Naive thymus-derived CD8-positive, alpha-beta T cell (primary cell): ENCODE measurements at regions of chr5 and their contacts with region 1.

Region 1: DNA sequence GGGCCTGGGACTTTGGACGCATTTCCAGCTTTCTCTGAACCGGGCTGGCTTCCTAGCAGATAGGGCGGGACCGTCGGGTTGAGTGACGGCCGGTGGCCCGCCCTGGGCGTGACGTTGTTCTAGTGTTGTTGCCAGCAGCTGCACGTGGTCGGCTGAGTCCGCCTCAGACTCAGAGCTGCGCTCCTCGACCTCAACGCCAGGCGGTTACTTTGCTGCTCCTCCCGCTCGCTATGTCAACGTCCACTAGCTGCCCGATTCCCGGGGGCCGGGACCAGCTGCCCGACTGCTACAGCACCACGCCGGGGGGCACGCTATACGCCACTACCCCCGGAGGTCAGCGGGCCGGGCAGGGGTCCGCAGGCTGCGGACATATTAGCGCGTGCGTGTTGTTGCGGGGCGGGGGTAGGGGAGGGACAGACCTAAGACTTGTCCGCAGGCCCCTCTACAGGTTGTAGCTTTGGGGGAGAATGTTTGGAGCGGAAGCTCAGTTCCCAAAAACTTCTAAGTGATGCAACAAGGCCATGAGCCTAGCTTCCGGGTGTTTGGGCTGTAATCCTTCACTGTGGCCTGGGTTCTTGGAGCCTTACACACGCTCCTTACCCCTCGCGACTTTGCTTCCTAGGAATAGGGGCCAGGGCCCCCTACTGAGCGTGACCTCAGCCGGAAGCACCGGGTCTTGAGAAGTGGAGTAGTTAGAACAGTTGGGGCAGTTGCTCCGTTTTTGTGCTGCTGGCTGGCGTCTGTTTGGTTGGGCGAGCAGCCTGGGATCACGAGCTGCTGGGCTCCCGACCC is at the start of gene EIF4EBP3:
- DNase-seq: peak; percentile 80 to 92 (median 87)
- ATAC-seq: peak; percentile 92 to 95
- H3K4me3 Mint-ChIP-seq: peak within 1 kb of the TSS; percentile 81 to 96 (median 93)
- H3K27ac Mint-ChIP-seq: peak within 1 kb of the TSS; percentile 94 to 99 (median 98)
- H3K4me1 Mint-ChIP-seq: peaks cover 13 to 36% (median 35%) of the 10 kb centered on the region in 4 donors
- H3K27me3 Mint-ChIP-seq: no peaks in the 10 kb centered on the region
- polyA plus RNA-seq, gene EIF4EBP3: 50.4 to 79.6 (median 71.5) TPM

Region 2: DNA sequence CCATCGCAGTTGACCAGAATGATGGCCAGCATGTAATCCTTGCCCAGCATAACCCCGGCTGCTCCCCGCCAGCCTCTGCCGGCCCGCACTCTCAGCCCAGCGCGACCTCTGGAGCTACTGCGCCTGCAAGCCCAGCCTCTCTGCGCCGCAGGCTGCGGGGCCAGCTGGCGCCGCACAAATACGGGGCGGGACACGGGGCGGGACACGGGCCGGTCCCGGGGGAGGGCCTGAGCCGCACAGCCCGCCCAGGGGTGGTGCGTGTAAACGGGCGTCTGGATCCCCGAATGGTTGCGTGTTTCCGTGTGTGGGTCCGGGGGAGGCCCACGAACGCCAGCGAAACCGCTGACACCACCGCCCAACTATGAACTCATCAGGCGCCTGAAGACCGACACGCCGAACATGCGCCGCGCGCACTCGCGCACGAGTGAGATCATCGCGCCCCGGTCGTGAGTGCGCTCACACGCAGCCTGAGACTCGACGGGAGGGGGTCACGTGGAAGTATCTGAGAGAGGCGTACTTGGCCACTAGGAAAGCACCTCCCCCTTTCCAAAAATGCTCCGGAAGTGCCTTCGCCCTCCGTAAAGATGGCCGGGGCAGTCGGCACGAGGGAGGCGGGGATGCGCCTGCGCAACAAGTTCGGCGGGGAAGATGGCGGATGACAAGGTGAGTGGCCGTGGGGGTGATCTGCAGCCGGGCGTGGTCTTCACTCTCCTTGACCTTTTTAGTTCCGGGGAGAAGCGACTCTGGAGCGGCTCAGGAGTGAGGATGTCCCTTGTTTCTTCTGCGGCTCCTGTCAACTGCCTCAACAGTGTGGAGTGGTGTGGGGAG is 16.7 kb after region 1 on chr5 and contains the starts of genes APBB3 and SLC35A4:
- POLR2A ChIA-PET with region 1: interaction called, 61 read pairs
- DNase-seq: peak; percentile 85 to 99 (median 98)
- ATAC-seq: peak; percentile 88
- H3K4me3 Mint-ChIP-seq: peak within 1 kb of the TSS; percentile 91 to 99 (median 96)
- H3K27ac Mint-ChIP-seq: peak within 1 kb of the TSS; percentile 96 to 99 (median 98)
- H3K4me1 Mint-ChIP-seq: peaks cover 39 to 71% (median 66%) of the 10 kb centered on the region in 4 donors
- H3K27me3 Mint-ChIP-seq: no peaks in the 10 kb centered on the region
- polyA plus RNA-seq, gene APBB3: 2.5 to 4.6 (median 3.7) TPM
- polyA plus RNA-seq, gene SLC35A4: 92.8 to 142 (median 113) TPM

Region 3: DNA sequence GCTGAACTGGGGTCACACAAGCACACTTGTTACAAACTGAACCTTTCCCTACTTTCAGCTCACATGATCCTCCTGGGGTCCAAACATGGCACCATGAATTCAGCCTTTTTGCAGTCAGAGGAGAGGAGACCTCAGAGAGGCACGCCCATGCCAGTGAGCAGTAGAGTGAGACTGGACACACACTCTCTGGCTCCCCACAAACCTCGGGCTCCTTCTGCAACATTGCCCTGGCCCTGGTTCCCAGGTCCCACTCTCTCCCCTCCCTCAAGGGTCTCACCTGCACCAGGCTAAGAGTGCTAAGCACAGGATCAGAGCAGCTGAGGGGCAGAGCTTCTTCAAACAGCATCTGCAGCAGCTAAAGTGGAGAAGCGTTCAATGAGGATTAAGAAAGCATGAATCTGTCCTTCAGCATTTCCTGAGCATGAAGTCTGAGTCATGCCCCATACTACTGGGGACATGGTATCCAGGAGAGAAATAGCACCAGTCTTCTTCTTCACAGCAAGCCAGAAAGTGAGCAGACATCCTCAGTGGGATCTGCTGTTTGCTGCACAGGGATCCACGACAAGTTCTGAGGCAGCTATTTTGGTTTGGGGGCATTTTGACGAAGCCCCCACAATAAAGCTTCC is 44.2 kb after region 1 on chr5:
- POLR2A ChIA-PET with region 1: no interaction called
- DNase-seq: no peak
- ATAC-seq: no peak
- H3K4me3 Mint-ChIP-seq: peak overlapping the region in 1 of 10 donors; percentile 7
- H3K27ac Mint-ChIP-seq: no peak overlapping the region
- H3K4me1 Mint-ChIP-seq: peaks cover 0 to 1% (median 0%) of the 10 kb centered on the region in 4 donors
- H3K27me3 Mint-ChIP-seq: peaks cover 0 to 5% (median 0%) of the 10 kb centered on the region in 5 donors

Region 4: DNA sequence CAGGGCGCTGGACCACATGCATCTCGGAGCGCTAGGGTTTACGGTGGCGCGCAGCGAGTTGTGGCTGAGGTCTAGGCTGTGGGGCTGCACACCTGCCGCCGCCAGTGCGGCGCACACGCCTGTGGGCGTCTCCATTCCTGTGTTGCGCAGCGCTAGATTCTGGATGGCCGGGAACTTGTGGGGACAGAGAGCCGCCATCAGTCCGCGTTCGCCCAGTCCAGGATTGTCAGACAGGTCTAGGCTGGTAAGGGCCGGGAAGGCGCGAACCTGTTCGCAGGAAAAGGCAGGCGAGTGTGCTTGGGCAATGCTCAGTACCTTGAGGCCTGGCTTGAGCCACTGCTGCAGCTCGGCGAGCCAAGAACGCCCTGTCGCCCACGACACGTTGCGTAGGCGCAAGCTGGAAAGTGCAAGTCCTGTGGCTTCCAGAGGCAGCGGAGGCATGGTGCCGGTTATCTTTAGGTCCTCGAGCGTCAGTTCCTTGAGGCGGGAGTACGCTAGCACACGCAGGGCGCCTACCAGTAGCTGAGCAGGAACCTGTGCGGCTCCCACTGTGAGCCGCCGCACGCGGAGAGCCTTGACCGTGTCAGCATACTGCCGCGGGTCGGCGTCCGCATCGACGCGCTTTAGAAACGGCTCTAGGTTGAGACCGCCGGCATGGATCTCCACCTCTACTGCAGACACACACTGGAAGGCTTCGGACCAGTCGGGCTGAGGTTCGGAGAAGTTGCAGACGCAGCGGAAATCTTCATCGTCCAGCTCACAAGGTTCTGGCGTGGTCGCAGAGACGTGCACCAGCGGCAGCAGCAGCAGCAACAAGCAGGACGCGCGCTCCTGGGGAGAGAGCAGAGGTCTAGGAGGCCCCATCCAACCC is 84.7 kb after region 1 on chr5:
- POLR2A ChIA-PET with region 1: interaction called, 23 read pairs
- DNase-seq: peak; percentile 22 to 70 (median 44)
- ATAC-seq: peak; percentile 86 to 87
- H3K4me3 Mint-ChIP-seq: peak overlapping the region; percentile 87 to 94 (median 92)
- H3K27ac Mint-ChIP-seq: peak overlapping the region; percentile 70 to 96 (median 85)
- H3K4me1 Mint-ChIP-seq: peaks cover 13 to 35% (median 28%) of the 10 kb centered on the region in 4 donors
- H3K27me3 Mint-ChIP-seq: peaks cover 0 to 13% (median 2%) of the 10 kb centered on the region in 5 donors

Region 5: DNA sequence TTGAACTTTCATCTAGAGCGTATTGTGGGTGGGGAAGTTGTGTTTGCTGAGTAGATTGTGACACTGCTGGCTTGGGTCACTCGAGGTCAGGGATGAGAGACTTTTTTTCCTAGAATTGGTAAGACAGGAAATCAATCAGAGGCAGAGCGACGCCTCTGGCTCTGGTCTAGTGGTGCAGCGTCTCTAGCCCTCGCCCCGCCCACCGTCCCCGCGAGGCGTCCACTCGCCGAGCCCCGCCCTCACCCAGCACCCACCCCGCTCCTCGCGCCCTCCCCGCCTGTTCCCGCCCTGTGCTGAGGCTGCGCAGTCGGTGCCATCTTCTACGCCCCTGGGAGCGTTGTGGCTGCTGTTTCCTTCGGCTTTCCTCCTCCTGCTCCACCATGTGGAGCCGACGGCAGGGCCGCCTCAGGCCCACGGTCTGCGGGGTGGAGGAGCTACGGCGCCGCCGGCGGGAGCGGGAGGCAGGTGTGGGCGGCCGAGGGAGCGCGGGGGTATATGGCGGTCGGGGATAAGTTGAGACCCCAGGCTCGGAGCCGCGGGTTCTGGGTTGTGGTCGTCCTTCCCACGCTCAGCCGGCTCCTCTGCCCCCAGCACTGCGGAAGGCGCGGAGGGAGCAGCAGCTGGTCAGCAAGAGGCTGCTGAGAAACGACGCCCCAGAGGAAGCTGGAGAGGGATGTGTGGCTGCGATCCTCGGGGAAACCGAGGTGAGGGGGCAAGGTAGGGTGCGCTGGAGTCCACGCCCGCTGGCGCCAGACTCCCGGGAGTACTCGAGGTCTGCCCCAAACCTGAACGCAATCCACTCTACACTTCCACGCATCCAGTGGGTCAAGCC is 91.7 kb after region 1 on chr5 and contains the start of gene TMCO6:
- POLR2A ChIA-PET with region 1: interaction called, 17 read pairs
- DNase-seq: peak; percentile 85 to 98 (median 94)
- ATAC-seq: peak; percentile 93 to 97
- H3K4me3 Mint-ChIP-seq: peak within 1 kb of the TSS; percentile 87 to 96 (median 92)
- H3K27ac Mint-ChIP-seq: peak within 1 kb of the TSS; percentile 85 to 100 (median 98)
- H3K4me1 Mint-ChIP-seq: peaks cover 23 to 47% (median 44%) of the 10 kb centered on the region in 4 donors
- H3K27me3 Mint-ChIP-seq: no peaks in the 10 kb centered on the region
- polyA plus RNA-seq, gene TMCO6: 11.5 to 20.5 (median 13.9) TPM

Region 6: GRCh38 chr5:140664359-140665119 is 116.8 kb after region 1 on chr5 and contains the start of gene WDR55:
- POLR2A ChIA-PET with region 1: interaction called, 14 read pairs
- DNase-seq: peak; percentile 91 to 98 (median 94)
- ATAC-seq: peak; percentile 91 to 93
- H3K4me3 Mint-ChIP-seq: peak within 1 kb of the TSS; percentile 91 to 99 (median 97)
- H3K27ac Mint-ChIP-seq: peak within 1 kb of the TSS; percentile 97 to 99 (median 98)
- H3K4me1 Mint-ChIP-seq: peaks cover 24 to 47% (median 38%) of the 10 kb centered on the region in 4 donors
- H3K27me3 Mint-ChIP-seq: no peaks in the 10 kb centered on the region
- polyA plus RNA-seq, gene WDR55: 9.2 to 15.6 (median 9.6) TPM

Region 7: DNA sequence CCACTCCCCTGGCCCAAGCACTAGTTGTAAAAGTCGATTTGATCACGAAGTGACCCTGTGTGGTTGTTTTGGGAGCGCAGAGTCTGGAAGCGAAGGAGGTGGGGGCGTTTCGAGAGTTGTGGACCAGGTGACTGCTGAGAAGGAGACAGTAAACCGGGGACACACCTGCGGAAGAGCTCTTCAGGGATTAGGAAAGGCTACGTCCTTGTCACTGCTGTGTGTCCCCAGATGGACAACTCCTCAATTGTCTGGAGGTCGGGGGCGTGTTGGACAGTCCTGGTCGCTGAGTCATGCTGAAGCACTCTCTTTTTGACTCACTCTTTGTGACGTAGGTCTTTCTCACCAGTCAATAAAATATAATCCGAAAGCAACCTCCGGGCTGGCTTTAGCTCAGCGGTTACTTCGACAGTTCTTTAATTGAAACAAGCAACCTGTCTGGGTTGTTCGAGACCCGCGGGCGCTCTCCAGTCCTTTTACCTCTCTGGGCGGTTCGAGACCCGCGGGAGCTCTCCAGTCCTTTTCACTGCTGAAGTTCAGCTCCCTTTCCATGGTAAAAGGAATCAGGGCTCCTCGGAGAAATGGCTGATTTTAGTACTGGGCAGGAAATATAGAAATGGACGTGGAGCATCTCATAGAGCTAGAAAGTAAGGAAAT is 163.3 kb after region 1 on chr5:
- POLR2A ChIA-PET with region 1: interaction called, 12 read pairs
- DNase-seq: peak; percentile 36 to 95 (median 86)
- ATAC-seq: peak; percentile 86 to 87
- H3K4me3 Mint-ChIP-seq: peak overlapping the region; percentile 93 to 100 (median 99)
- H3K27ac Mint-ChIP-seq: peak overlapping the region; percentile 97 to 100 (median 98)
- H3K4me1 Mint-ChIP-seq: peaks cover 11 to 24% (median 18%) of the 10 kb centered on the region in 4 donors
- H3K27me3 Mint-ChIP-seq: no peaks in the 10 kb centered on the region

Region 8: DNA sequence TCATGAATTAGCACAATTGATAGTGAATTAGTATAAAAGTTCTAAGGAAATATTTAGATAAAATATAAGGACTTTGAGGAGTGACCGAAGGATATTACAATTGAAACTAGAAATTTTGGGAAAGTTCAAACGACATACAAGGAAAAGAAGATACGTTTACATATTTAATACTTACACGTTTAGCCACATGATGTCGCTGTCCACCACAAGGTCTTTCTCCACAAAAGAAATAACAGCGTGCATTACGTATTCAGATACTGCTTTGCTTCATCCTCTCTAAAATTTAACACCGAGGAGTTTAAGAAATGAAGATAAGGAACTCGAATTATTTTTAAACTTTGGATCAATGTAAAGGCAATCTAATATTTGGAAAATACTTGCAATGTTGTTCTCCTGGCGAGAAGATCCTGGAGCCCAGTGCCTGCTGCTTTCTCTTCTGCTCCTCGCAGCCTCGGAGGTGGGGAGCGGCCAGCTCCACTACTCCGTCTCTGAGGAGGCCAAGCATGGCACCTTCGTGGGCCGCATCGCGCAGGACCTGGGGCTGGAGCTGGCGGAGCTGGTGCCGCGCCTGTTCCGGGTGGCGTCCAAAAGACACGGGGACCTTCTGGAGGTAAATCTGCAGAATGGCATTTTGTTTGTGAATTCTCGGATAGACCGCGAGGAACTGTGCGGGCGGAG is 253.3 kb after region 1 on chr5 and contains the start of gene PCDHA3:
- POLR2A ChIA-PET with region 1: no interaction called
- DNase-seq: no peak
- ATAC-seq: no peak
- H3K4me3 Mint-ChIP-seq: no peak within 1 kb of the TSS
- H3K27ac Mint-ChIP-seq: peak within 1 kb of the TSS in 1 of 10 donors; percentile 65
- H3K4me1 Mint-ChIP-seq: no peaks in the 10 kb centered on the region
- H3K27me3 Mint-ChIP-seq: peaks cover 20 to 42% (median 23%) of the 10 kb centered on the region in 5 donors
- polyA plus RNA-seq, gene PCDHA3: not detected